Endothelial cell of umbilical vein (primary cell): ENCODE measurements at regions of chr2 and their contacts with region 1.

Region 1: DNA sequence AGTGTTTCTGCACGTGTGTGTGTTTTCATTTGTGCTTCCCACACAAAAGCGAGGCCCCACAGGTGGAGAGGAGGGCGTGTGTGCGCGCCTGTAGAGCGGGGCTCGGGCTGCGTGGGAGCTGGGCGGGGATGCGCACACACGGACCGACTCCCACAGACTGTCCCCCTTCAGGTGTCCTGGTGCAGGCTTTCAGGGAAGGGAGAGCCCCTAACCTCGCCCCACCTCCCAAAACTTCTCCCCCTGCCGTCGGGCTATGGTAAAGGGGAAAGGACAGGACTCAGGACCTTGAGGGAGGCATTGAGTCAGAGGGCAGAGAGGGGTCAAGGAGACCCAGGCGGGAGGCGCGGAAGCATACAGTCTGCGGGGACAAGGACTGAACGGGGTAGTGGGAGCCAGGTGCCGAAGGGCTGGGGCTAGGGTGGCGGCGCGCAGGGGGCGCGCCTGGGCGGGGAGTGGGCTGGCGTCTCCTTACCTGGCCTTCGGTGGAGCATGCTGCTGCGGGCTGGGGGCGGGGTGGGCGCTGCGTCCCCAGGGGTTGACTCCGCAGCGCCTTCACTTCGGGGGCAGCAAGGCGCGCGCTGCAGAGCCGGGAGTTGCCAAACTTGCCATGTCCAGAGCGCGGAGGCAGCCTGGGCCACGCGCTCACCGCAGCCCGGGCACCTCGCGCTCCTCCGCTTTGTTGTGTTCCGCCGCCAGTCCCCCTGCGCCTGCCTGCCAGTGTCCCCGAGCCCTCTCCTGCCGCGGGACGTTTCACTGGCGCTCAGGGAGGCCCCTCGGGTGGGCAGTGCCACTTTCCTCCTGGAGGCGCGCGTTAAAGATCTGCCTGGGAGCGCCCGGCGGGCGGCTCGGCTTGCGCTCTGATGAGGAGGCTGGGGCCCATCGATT is 302.0 kb downstream of the NCKAP5 start:
- DNase-seq: peak; percentile 13
- H3K4me3 ChIP-seq: peak overlapping the region; percentile 21 to 57 (median 41)
- H3K27ac ChIP-seq: no peak overlapping the region
- H3K4me1 ChIP-seq: peaks cover 4% of the 10 kb centered on the region
- H3K27me3 ChIP-seq: no peaks in the 10 kb centered on the region
- CTCF ChIP-seq: no peak
- POLR2A ChIP-seq: no peak

Region 2: DNA sequence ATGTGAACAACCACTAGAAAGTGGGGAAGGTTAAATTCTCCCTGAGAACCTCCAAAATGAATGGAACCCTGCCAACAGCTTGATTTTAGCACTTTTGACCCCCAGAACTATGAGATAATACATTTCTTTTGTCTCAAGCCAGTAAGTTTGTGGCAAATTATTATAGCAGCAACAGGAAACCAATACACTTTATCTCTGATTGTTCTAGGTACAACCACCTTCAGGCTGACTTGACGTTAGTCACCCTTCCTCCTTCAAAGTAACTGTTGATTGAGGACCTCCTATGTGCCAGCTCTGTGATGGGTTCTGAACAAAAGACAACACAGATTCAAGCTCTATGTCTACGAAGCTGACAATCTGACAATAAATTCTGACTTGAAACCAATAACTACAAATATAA is 16.9 kb before region 1 on chr2:
- CTCF ChIA-PET with region 1: interaction called, 4 read pairs
- POLR2A ChIA-PET with region 1: no interaction called
- dilution Hi-C with region 1: no loop called
- intact Hi-C with region 1: loop called (anchors 1 kb)
- DNase-seq: peak; percentile 64
- H3K4me3 ChIP-seq: no peak overlapping the region
- H3K27ac ChIP-seq: no peak overlapping the region
- H3K4me1 ChIP-seq: peaks cover 6% of the 10 kb centered on the region
- H3K27me3 ChIP-seq: no peaks in the 10 kb centered on the region
- CTCF ChIP-seq: no peak
- POLR2A ChIP-seq: no peak

Region 3: GRCh38 chr2:133303134-133303533 is 36.9 kb after region 1 on chr2:
- CTCF ChIA-PET with region 1: no interaction called
- POLR2A ChIA-PET with region 1: no interaction called
- dilution Hi-C with region 1: no loop called
- intact Hi-C with region 1: no loop called
- DNase-seq: no peak
- H3K4me3 ChIP-seq: no peak overlapping the region
- H3K27ac ChIP-seq: no peak overlapping the region
- H3K4me1 ChIP-seq: no peaks in the 10 kb centered on the region
- H3K27me3 ChIP-seq: no peaks in the 10 kb centered on the region
- CTCF ChIP-seq: no peak
- POLR2A ChIP-seq: no peak

Region 4: GRCh38 chr2:133568172-133568571 is 301.9 kb after region 1 on chr2 and contains the start of gene NCKAP5:
- CTCF ChIA-PET with region 1: no interaction called
- POLR2A ChIA-PET with region 1: no interaction called
- dilution Hi-C with region 1: no loop called
- intact Hi-C with region 1: loop called (anchors 5 kb)
- DNase-seq: peak; percentile 61
- H3K4me3 ChIP-seq: peak within 1 kb of the TSS in 2 of 3 experiments; percentile 0 to 36
- H3K27ac ChIP-seq: no peak within 1 kb of the TSS
- H3K4me1 ChIP-seq: peaks cover 5% of the 10 kb centered on the region
- H3K27me3 ChIP-seq: no peaks in the 10 kb centered on the region
- CTCF ChIP-seq: no peak
- POLR2A ChIP-seq: no peak
- total RNA-seq, gene NCKAP5: 3.0 and 3.3 TPM in 2 replicates